ENCODE measurements at regions of chr18 and their contacts with region 1.

Region 1: DNA sequence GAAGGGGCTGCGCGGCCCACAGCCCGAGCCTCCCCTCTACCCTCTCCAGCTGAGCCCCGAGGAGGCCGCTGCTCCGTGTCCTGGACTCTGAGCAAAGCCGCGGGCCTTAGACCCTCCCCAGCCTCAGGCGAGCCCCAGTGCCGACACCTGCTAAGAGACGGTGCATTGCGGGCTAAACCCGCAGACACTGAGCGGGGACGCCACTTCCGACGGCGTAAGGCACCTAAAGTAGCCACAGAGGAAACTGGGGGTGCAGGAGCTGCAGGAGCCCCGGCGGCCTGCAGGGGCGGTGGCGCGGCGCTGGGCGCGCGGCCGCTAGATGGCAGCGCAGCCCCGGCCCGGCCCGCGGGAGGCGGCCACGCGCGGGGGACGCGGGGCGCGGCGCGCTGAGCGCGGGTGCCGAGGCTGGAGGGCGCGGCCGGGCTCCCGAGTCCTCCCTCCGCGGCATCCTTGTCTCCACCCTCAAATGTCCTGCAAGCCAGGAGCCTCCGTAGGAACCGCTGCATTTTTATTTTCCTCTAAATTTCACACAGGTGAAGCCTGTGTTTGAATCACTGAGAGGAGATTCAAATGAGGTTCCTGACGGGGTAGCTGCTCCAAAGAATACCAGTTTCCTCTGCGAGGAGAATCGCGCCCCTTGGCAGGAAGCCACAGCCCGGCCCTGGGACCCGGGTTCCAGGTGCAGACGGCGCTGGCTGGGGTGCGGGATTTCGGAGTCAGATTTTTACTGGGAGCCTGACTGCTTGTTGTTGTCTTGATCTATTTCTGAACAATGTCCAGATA is 650.5 kb downstream of the GALR1 start:
- DNase-seq: no peak
- H3K4me3 ChIP-seq: peak overlapping the region; percentile 23 to 36
- H3K27ac ChIP-seq: no peak overlapping the region
- H3K4me1 ChIP-seq: peaks cover 4% of the 10 kb centered on the region
- H3K27me3 ChIP-seq: no peaks in the 10 kb centered on the region
- CTCF ChIP-seq: peak; percentile 8 to 64 (median 55)
- POLR2A ChIP-seq: no peak

Region 2: GRCh38 chr18:76922107-76922506 is 978.1 kb before region 1 on chr18:
- intact Hi-C with region 1: loop called (anchors 5 kb)
- DNase-seq: no peak
- H3K4me3 ChIP-seq: no peak overlapping the region
- H3K27ac ChIP-seq: no peak overlapping the region
- H3K4me1 ChIP-seq: no peaks in the 10 kb centered on the region
- H3K27me3 ChIP-seq: no peaks in the 10 kb centered on the region
- CTCF ChIP-seq: peak in 1 of 3 experiments; percentile 25
- POLR2A ChIP-seq: no peak

Region 3: DNA sequence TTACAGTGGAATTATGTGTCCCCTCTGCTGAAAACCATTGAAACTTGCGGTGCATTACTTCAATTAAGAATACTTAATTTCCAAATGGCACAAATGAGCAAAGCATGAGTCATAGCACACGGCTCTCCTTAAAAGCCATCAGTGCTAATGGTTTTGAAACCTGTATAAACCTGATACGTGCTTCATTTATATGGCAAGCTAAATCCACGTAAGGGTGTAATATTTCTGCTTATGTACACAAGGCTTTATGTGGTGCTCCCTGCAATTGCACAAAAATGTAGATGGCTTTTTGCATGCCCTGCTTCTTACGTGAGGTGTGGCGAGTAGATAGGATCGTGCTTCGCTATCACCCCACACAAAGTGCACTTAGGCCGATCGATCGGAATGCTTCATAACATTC is 190.4 kb after region 1 on chr18:
- intact Hi-C with region 1: no loop called
- DNase-seq: no peak
- H3K4me3 ChIP-seq: no peak overlapping the region
- H3K27ac ChIP-seq: no peak overlapping the region
- H3K4me1 ChIP-seq: no peaks in the 10 kb centered on the region
- H3K27me3 ChIP-seq: no peaks in the 10 kb centered on the region
- CTCF ChIP-seq: no peak
- POLR2A ChIP-seq: no peak

Region 4: GRCh38 chr18:78242254-78242643 is 342.1 kb after region 1 on chr18:
- intact Hi-C with region 1: loop called (anchors 5 kb)
- DNase-seq: no peak
- H3K4me3 ChIP-seq: no peak overlapping the region
- H3K27ac ChIP-seq: no peak overlapping the region
- H3K4me1 ChIP-seq: peaks cover 12% of the 10 kb centered on the region
- H3K27me3 ChIP-seq: no peaks in the 10 kb centered on the region
- CTCF ChIP-seq: no peak
- POLR2A ChIP-seq: no peak

Measured in vagina (tissue), 2 donors.